A673 (cell line): ENCODE measurements at regions of chr5 and their contacts with region 1.

Region 1: GRCh38 chr5:175823731-175824525 is 47.5 kb upstream of the CPLX2 start:
- DNase-seq: peak; percentile 19
- H3K4me3 ChIP-seq: no peak overlapping the region
- H3K27ac ChIP-seq: no peak overlapping the region
- H3K4me1 ChIP-seq: peaks cover 7% of the 10 kb centered on the region
- H3K27me3 ChIP-seq: no peaks in the 10 kb centered on the region
- CTCF ChIP-seq: no peak

Region 2: DNA sequence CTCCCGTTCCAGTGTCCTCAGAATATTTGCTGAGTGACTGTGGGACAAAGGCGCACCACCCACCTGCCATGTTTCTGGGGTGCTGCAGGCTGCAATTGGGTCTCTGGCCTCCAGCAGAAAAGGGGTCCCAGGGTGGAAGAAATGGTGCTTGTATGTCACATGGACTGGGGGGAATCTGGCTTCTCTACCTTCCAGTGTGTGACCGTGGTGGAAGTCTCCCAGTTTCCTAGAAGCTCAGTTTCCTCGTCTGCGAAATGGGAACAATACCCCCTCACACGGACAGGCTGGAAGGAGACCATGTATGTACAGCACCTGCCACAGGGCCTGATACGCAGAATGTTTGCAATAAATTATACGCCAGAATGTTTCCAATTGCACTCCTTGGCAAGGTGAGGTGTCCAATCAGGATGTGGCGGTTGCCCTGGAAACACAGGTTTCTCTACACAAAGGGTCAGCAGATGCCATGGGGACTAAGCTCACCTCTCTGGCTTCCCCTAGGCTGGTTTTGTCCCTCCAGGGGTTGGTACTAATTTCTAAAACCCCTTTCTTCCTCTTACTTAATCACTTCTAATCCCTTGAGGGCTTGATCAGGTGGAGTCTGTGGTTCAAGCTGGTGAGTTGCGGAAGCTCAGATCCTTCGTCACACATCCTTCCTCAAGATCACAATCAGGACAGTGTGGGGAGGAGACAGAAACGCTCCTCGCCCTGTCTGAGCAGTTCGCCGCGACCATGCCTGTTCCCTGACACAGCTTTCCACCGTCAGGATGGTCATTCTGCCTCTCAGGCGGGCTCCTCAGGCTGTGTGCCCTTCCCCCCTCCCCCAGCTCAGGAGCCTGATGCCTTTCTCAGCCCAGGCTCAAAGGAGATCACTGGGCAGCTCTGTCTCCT is 71.5 kb after region 1 on chr5:
- CTCF ChIA-PET with region 1: interaction called, 15 read pairs
- POLR2A ChIA-PET with region 1: no interaction called
- intact Hi-C with region 1: no loop called
- DNase-seq: no peak
- H3K4me3 ChIP-seq: no peak overlapping the region
- H3K27ac ChIP-seq: no peak overlapping the region
- H3K4me1 ChIP-seq: no peaks in the 10 kb centered on the region
- H3K27me3 ChIP-seq: no peaks in the 10 kb centered on the region
- CTCF ChIP-seq: no peak